K562 (cell line): ENCODE measurements at regions of chr1 and their contacts with region 1.

Region 1: GRCh38 chr1:92826792-92827191 is 5.0 kb upstream of the RPL5 start:
- DNase-seq: peak in 1 of 4 experiments; percentile 29
- ATAC-seq: no peak
- H3K4me3 ChIP-seq: no peak overlapping the region
- H3K27ac ChIP-seq: no peak overlapping the region
- H3K4me1 ChIP-seq: no peaks in the 10 kb centered on the region; a peak in 1 of 5 replicates
- H3K27me3 ChIP-seq: no peaks in the 10 kb centered on the region
- CTCF ChIP-seq: no peak
- EP300 ChIP-seq: no peak
- POLR2A ChIP-seq: no peak
- RAD21 ChIP-seq: no peak

Region 2: GRCh38 chr1:92376345-92376744 is 450.4 kb before region 1 on chr1:
- CTCF ChIA-PET with region 1: no interaction called
- POLR2A ChIA-PET with region 1: no interaction called
- in situ Hi-C with region 1: no loop called
- intact Hi-C with region 1: no loop called
- DNase-seq: no peak
- ATAC-seq: no peak
- H3K4me3 ChIP-seq: no peak overlapping the region
- H3K27ac ChIP-seq: no peak overlapping the region
- H3K4me1 ChIP-seq: peaks cover 0 to 4% of the 10 kb centered on the region in 2 experiments; a peak in 2 of 5 replicates
- H3K27me3 ChIP-seq: no peaks in the 10 kb centered on the region
- CTCF ChIP-seq: no peak
- EP300 ChIP-seq: no peak
- POLR2A ChIP-seq: no peak
- RAD21 ChIP-seq: no peak

Region 3: DNA sequence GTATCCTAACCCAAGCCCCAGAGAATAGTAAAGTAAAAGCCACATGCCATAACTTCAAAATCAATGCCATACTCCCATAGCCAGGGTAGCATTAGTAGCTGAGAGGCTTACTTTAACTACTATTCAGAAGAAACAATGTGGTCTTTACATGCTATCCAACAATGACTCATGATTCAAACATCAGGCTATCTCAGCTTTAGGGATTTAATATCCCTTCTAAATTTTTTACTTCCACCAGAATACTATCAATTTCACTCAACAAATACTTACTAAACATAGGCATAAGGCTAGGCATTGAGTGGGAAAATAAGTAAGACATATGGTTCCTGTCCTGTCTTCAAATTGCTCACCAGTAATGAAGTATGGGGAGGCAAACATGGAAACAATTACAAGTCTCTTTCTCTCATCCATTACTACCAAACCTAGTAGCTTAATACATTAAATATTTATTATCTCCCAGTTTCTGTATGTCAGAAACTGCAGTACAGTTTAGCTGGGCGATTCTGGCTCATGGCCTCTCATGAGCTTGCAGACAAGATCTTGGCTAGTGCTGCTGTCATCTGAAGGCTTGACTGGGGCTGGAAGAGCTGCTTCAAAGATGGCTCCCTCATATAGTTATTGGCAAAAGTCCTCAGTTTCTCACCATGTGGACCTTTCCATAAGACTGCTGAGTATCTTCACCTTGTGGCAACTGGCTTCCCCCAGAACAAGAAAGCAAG is 72.6 kb before region 1 on chr1:
- CTCF ChIA-PET with region 1: no interaction called
- POLR2A ChIA-PET with region 1: interaction called, 5 read pairs
- in situ Hi-C with region 1: loop called (anchors 5 kb)
- intact Hi-C with region 1: loop called (anchors 5 kb)
- DNase-seq: no peak
- ATAC-seq: no peak
- H3K4me3 ChIP-seq: no peak overlapping the region
- H3K27ac ChIP-seq: no peak overlapping the region
- H3K4me1 ChIP-seq: peaks cover 4 to 12% of the 10 kb centered on the region in 2 experiments; a peak in 4 of 5 replicates
- H3K27me3 ChIP-seq: no peaks in the 10 kb centered on the region; a peak in 1 of 5 replicates
- CTCF ChIP-seq: no peak
- EP300 ChIP-seq: no peak
- POLR2A ChIP-seq: no peak
- RAD21 ChIP-seq: no peak